ENCODE measurements at regions of chrX and their contacts with region 1.

Region 1: GRCh38 chrX:71178908-71179307 is 34.3 kb downstream of the NLGN3 start:
- DNase-seq: peak in 38 of 42 donors; percentile 33 to 86 (median 63)

Region 2: GRCh38 chrX:70129816-70130215 is 1049.1 kb before region 1 on chrX:
- intact Hi-C with region 1: no loop called
- DNase-seq: peak in 4 of 42 donors; percentile 5 to 35 (median 12)

Region 3: DNA sequence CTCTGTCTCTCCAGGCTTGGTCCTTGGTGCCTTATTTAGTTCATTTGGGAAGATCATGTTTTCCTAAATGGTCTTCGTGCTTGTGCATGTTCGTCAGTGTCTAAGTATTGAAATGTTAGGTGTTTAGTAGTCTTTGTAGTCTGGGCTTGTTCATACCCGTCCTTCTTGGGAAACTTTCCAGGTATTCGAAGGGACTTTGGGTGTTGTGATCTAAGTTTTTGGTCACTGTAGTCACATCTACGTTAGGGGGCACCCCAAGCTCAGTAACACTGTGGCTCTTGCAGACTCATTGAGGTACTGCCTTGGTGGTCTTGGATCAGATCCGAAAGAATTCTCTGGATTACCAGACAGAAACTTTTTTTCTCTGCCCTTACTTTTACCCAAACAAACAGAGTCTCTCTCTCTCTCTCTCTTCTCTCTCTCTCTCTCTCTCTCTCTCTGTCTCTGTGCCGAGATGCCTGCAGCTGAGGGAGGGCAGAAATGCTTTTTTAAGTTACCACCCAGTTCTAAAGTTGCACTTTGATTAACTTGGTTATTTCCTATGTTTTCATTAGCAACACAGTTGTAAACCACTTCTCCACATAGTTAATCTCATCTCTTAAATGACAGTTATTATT is 180.4 kb before region 1 on chrX:
- intact Hi-C with region 1: loop called (anchors 10 kb)
- DNase-seq: peak in 38 of 42 donors; percentile 6 to 73 (median 36)

Region 4: DNA sequence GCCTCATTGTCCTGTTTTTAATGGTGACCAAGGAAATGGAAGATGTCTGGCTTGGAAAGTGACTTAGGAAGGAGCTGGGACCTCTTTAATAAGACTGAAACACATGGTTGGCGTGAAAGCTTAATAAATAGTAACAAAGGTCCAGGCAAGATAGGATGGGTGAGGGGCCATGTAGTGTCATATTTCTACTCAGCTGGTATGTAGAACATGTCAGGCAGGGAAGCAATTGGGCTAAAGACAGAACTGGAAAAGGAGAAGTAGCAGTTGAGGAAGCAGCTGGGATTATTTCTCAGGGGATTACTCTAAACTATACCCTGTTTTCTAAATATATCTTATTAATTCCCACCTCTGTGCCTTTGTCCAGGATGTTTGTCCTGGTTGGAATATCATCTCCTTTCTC is 141.2 kb after region 1 on chrX:
- intact Hi-C with region 1: no loop called
- DNase-seq: no peak